MCF 10A (cell line): ENCODE measurements at regions of chr12 and their contacts with region 1.

Region 1: DNA sequence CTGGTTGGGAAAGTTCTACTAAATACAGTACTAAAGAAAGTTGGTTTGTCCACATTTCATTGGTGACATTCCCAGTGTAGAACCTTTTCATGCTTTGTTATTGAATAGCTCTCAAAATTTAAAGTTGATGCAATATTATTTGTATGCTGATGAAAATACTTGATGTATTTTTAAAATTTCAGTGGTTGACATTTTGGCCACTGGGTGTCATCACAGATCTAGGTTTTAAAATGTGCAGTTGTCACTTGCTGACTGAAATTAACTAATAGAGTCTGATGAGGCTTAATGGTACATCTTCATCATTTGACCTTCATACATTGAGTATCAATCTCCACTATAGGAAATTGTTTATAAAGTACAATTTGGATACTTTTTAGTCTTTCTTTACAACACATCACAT is 37.1 kb downstream of the CMAS start:
- DNase-seq: peak; percentile 47
- H3K4me3 Mint-ChIP-seq: no peak overlapping the region
- H3K27ac Mint-ChIP-seq: no peak overlapping the region
- H3K4me1 Mint-ChIP-seq: no peaks in the 10 kb centered on the region
- H3K27me3 Mint-ChIP-seq: no peaks in the 10 kb centered on the region
- CTCF ChIP-seq: peak; percentile 58

Region 2: DNA sequence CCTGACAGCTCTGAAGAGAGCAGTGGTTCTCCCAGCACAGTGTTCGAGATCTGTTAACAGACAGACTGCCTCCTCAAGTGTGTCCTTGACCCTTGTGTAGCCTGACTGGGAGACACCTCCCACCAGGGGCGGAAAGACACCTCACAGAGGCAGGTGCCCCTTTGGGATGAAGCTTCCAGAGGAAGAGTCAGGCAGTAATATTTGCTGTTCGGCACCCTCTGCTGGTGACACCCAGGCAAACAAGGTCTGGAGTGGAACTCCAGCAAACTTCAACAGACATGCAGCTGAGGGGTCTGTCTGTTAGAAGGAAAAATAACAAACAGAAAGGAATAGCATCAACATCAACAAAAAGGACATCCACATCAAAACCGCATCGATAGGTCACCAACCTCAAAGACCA is 120.3 kb before region 1 on chr12:
- CTCF ChIA-PET with region 1: no interaction called
- POLR2A ChIA-PET with region 1: no interaction called
- intact Hi-C with region 1: no loop called
- DNase-seq: no peak
- H3K4me3 Mint-ChIP-seq: no peak overlapping the region
- H3K27ac Mint-ChIP-seq: no peak overlapping the region
- H3K4me1 Mint-ChIP-seq: no peaks in the 10 kb centered on the region
- H3K27me3 Mint-ChIP-seq: no peaks in the 10 kb centered on the region
- CTCF ChIP-seq: peak; percentile 5

Region 3: GRCh38 chr12:22029991-22030390 is 53.2 kb before region 1 on chr12:
- CTCF ChIA-PET with region 1: no interaction called
- POLR2A ChIA-PET with region 1: no interaction called
- intact Hi-C with region 1: no loop called
- DNase-seq: peak; percentile 22
- H3K4me3 Mint-ChIP-seq: no peak overlapping the region
- H3K27ac Mint-ChIP-seq: no peak overlapping the region
- H3K4me1 Mint-ChIP-seq: peaks cover 7% of the 10 kb centered on the region
- H3K27me3 Mint-ChIP-seq: no peaks in the 10 kb centered on the region
- CTCF ChIP-seq: no peak

Region 4: GRCh38 chr12:22059976-22060647 is 23.1 kb before region 1 on chr12:
- CTCF ChIA-PET with region 1: interaction called, 10 read pairs
- POLR2A ChIA-PET with region 1: no interaction called
- intact Hi-C with region 1: no loop called
- DNase-seq: no peak
- H3K4me3 Mint-ChIP-seq: no peak overlapping the region
- H3K27ac Mint-ChIP-seq: no peak overlapping the region
- H3K4me1 Mint-ChIP-seq: no peaks in the 10 kb centered on the region
- H3K27me3 Mint-ChIP-seq: no peaks in the 10 kb centered on the region
- CTCF ChIP-seq: no peak

Region 5: GRCh38 chr12:22069856-22070565 is 13.2 kb before region 1 on chr12:
- CTCF ChIA-PET with region 1: interaction called, 17 read pairs
- POLR2A ChIA-PET with region 1: interaction called, 4 read pairs
- intact Hi-C with region 1: no loop called
- DNase-seq: no peak
- H3K4me3 Mint-ChIP-seq: no peak overlapping the region
- H3K27ac Mint-ChIP-seq: no peak overlapping the region
- H3K4me1 Mint-ChIP-seq: no peaks in the 10 kb centered on the region
- H3K27me3 Mint-ChIP-seq: no peaks in the 10 kb centered on the region
- CTCF ChIP-seq: no peak

Region 6: GRCh38 chr12:22173177-22173576 is 90.0 kb after region 1 on chr12:
- CTCF ChIA-PET with region 1: interaction called, 4 read pairs
- POLR2A ChIA-PET with region 1: no interaction called
- intact Hi-C with region 1: loop called (anchors 1 kb)
- DNase-seq: peak; percentile 2
- H3K4me3 Mint-ChIP-seq: no peak overlapping the region
- H3K27ac Mint-ChIP-seq: no peak overlapping the region
- H3K4me1 Mint-ChIP-seq: no peaks in the 10 kb centered on the region
- H3K27me3 Mint-ChIP-seq: no peaks in the 10 kb centered on the region
- CTCF ChIP-seq: no peak

Region 7: DNA sequence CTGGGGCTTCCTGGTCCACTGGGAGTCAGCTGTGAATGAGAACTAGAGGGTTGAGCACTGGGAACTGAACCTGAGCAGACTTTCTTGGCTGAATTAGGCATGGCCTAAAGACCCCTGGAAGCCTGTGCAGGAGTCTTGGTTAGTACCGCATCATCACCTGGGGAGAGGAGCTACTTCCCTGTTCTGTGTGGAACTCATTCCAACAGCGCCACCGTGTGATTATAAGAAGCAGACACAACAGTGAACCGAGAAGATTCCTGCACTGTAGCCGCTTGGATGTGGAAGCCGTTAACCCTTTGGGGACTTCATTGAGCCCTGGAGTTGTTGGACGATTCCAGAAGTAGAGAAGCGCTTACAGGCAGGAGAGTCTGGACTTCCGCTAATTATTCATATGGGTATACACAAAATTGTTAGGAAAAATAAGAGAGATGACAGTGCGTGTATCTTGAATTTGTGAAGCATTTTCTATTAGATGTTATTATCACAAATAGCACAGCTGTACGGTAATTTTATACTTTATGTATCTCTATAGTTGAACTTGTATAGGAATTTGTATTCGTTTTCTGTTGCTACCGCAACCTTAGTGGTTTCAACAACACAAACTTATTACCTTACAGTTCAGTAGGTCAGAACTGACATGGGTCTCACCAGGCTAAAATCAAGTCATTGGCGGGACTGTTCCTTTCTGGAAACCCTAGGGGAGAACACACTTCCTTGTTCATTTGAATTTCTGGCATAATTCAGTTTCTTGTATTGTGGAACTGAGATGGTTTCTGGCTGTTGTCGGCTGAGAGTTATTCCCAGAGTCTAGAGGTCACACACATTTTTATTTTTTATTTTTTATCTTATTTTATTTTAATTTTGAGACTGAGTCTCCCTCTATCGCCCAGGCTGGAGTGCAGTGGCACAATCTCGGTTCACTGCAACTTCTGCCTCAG is 360.5 kb after region 1 on chr12:
- CTCF ChIA-PET with region 1: interaction called, 51 read pairs
- POLR2A ChIA-PET with region 1: interaction called, 8 read pairs
- intact Hi-C with region 1: loop called (anchors 1 kb)
- DNase-seq: peak; percentile 87
- H3K4me3 Mint-ChIP-seq: no peak overlapping the region
- H3K27ac Mint-ChIP-seq: no peak overlapping the region
- H3K4me1 Mint-ChIP-seq: no peaks in the 10 kb centered on the region
- H3K27me3 Mint-ChIP-seq: peaks cover 20% of the 10 kb centered on the region
- CTCF ChIP-seq: peak; percentile 73

Region 8: GRCh38 chr12:22459838-22460490 is 376.8 kb after region 1 on chr12:
- CTCF ChIA-PET with region 1: interaction called, 99 read pairs
- POLR2A ChIA-PET with region 1: no interaction called
- intact Hi-C with region 1: loop called (anchors 1 kb)
- DNase-seq: peak; percentile 64
- H3K4me3 Mint-ChIP-seq: no peak overlapping the region
- H3K27ac Mint-ChIP-seq: no peak overlapping the region
- H3K4me1 Mint-ChIP-seq: no peaks in the 10 kb centered on the region
- H3K27me3 Mint-ChIP-seq: no peaks in the 10 kb centered on the region
- CTCF ChIP-seq: peak; percentile 55

Region 9: DNA sequence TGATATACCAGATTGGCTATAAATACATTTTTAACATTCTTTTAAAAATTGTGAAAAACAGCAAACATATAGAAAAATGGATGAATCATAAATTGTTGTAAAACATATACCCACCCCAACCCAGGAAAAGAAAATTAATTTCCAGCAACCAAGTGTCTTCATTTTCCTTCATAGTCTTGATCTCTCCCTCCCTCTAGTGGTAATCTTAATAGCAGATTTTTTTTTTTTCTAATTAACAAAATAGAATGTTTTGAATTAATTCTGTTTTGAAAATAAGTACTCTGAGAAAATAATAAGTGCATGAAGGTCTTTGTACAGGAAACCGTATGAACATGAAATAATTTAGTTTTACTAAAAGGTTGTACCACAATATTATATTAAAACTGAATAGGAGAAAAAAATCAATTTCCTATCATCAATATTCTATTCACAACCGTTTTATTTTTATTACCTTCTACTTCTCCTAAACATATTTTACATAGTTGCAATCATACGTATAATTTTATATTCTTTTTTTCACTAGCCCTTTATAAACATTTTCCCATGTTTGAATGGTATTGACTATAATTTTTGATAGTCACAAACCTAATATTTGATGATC is 548.8 kb after region 1 on chr12:
- CTCF ChIA-PET with region 1: no interaction called
- POLR2A ChIA-PET with region 1: no interaction called
- intact Hi-C with region 1: loop called (anchors 1 kb)
- DNase-seq: peak; percentile 21
- H3K4me3 Mint-ChIP-seq: no peak overlapping the region
- H3K27ac Mint-ChIP-seq: peak overlapping the region; percentile 18
- H3K4me1 Mint-ChIP-seq: peaks cover 39% of the 10 kb centered on the region
- H3K27me3 Mint-ChIP-seq: no peaks in the 10 kb centered on the region
- CTCF ChIP-seq: peak; percentile 54